ENCODE measurements at regions of chr3 and their contacts with region 1.

Region 1: DNA sequence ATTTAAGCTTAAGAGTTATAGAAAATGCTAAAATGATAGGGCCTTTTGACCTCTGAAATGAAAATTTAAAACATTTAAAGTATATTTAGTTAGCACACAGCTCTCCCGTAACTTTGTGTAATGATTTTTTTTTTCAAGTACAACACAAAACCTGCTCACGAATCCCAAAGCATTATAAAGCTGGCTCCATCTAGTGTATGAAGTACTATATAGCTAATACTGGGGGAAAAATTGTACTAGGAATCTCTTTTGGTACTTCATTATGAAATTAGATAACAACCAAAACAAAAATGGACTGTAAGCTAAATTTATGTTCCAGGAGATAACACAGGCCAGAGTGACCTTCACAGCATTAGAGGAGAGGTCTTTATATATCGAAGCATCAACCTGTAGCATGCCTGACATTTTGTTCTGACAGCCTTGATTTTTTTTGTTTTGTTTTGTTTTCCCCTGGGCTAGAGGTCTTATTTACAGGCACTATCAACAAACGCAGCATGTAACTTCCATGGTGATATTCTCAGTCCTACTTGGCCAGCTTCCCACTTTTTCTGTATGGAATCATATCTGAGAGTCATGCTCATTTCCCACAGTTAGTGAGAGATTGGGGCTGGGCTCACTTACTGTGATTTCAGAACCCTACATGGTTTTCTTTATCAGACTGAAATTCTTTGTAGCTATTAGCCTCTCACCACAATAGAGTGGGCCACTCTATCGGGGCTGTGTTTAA is 116.3 kb downstream of the MITF start:
- DNase-seq: no peak
- H3K4me3 ChIP-seq: no peak overlapping the region
- H3K4me3 Mint-ChIP-seq: no peak overlapping the region
- H3K27ac Mint-ChIP-seq: no peak overlapping the region
- H3K4me1 ChIP-seq: no peaks in the 10 kb centered on the region
- H3K4me1 Mint-ChIP-seq: peaks cover 6% of the 10 kb centered on the region
- H3K27me3 ChIP-seq: no peaks in the 10 kb centered on the region
- H3K27me3 Mint-ChIP-seq: peaks cover 3% of the 10 kb centered on the region
- CTCF ChIP-seq: peak; percentile 41 to 58

Region 2: DNA sequence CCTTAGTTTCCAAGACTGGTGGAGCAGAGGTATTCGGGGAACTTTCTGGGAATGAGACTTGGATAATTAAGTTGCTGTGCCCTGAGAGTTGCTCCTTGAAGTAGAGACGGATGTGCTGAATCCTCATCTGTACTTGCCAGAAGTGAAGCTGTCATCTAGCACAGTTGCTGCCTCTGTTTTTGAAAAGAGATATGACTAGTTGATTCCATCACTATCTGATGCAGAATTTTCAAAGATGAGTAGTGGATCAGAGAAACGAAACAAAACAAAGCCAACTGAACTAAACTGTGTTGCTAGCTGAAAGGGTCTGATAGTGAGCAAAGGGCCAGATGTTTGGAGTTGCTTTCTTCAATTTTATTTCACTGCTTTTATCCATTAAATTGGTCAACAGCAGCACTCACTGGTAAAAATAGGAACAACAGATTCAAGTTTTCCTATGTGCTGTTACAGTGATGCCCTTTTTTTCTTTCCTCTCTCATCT is 63.6 kb before region 1 on chr3:
- CTCF ChIA-PET with region 1: no interaction called
- POLR2A ChIA-PET with region 1: no interaction called
- intact Hi-C with region 1: loop called (anchors 2 kb)
- DNase-seq: peak in 1 of 2 experiments; percentile 5
- H3K4me3 ChIP-seq: no peak overlapping the region
- H3K4me3 Mint-ChIP-seq: no peak overlapping the region
- H3K27ac Mint-ChIP-seq: no peak overlapping the region
- H3K4me1 ChIP-seq: peaks cover 6% of the 10 kb centered on the region; the same call in 1 of the 2 replicates
- H3K4me1 Mint-ChIP-seq: peaks cover 6% of the 10 kb centered on the region
- H3K27me3 ChIP-seq: no peaks in the 10 kb centered on the region
- H3K27me3 Mint-ChIP-seq: no peaks in the 10 kb centered on the region
- CTCF ChIP-seq: peak; percentile 24 to 35

Region 3: DNA sequence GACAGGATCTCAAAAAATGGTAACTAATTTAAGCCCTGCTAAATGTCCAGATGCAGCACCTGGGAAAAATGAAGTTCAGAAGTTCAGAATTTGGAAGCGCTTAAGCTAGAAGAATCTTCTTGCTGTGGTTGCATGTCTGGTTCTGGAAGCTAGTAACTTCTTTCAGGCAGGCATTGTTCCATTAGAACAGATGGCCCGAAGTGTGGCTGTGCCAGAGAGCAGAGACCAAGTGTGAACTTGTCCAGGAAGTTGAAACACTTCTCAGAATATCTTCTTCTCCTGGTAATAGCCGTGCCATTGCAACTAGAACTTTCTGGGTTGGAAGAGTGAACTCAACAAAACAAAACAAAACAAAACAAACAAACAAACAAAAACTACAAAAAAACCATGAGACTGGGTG is 36.3 kb before region 1 on chr3:
- CTCF ChIA-PET with region 1: interaction called, 3 read pairs
- POLR2A ChIA-PET with region 1: no interaction called
- intact Hi-C with region 1: loop called (anchors 5 kb)
- DNase-seq: no peak
- H3K4me3 ChIP-seq: no peak overlapping the region
- H3K4me3 Mint-ChIP-seq: no peak overlapping the region
- H3K27ac Mint-ChIP-seq: no peak overlapping the region
- H3K4me1 ChIP-seq: peaks cover 30% of the 10 kb centered on the region
- H3K4me1 Mint-ChIP-seq: peaks cover 22% of the 10 kb centered on the region
- H3K27me3 ChIP-seq: no peaks in the 10 kb centered on the region
- H3K27me3 Mint-ChIP-seq: no peaks in the 10 kb centered on the region
- CTCF ChIP-seq: no peak

Region 4: GRCh38 chr3:70333080-70333479 is 477.5 kb after region 1 on chr3:
- CTCF ChIA-PET with region 1: no interaction called
- POLR2A ChIA-PET with region 1: no interaction called
- intact Hi-C with region 1: no loop called
- DNase-seq: no peak
- H3K4me3 ChIP-seq: no peak overlapping the region
- H3K4me3 Mint-ChIP-seq: no peak overlapping the region
- H3K27ac Mint-ChIP-seq: no peak overlapping the region
- H3K4me1 ChIP-seq: no peaks in the 10 kb centered on the region
- H3K4me1 Mint-ChIP-seq: no peaks in the 10 kb centered on the region
- H3K27me3 ChIP-seq: no peaks in the 10 kb centered on the region
- H3K27me3 Mint-ChIP-seq: no peaks in the 10 kb centered on the region
- CTCF ChIP-seq: no peak

Measured in Caco-2 (cell line).